PC-3 (cell line): ENCODE measurements at regions of chr13 and their contacts with region 1.

Region 1: GRCh38 chr13:110499621-110500281 is 61.8 kb downstream of the RAB20 start:
- DNase-seq: peak; percentile 80
- ATAC-seq: peak; percentile 88
- H3K4me3 ChIP-seq: peak overlapping the region; percentile 25; the same call in 1 of the 2 replicates
- H3K27ac ChIP-seq: peak overlapping the region; percentile 98
- H3K4me1 ChIP-seq: peaks cover 24% of the 10 kb centered on the region
- H3K27me3 ChIP-seq: no peaks in the 10 kb centered on the region
- CTCF ChIP-seq: no peak

Region 2: DNA sequence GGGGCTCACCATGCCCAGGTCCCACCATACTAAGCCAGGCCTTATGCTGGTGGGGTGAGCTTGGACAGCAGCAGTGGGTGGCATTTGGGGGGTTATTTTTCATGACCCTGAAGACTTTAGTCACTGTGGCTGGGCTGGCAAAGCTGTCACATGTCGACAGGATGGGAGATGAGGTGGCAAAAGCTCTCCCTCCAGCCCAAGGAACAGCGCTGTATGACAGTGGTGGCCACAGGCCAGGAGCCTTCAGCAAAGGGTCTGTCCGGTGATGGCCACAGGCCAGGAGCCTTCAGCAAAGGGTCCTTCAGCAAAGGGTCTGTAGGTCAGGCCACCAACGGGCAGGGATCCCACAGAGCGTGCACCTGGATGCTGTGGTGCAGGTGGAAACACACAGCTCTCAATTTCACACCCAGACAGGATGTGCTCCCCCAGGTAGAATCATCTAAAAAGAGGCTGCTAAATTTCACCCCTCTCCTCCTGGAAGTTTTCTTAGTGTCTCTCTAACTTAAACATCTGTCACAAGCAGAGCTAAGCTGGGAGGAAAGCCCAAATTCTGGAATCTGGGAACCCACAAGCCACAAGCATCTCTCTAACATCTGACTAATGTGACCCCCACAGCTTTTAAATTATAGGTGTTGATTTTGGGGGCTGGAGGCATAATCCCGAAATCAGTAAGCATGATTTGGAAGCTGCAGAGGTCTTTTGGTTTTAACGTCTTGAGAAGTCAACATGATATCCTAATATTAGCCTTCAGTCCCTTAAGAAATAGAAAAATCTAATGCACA is 215.8 kb before region 1 on chr13:
- CTCF ChIA-PET with region 1: no interaction called
- POLR2A ChIA-PET with region 1: no interaction called
- intact Hi-C with region 1: no loop called
- DNase-seq: no peak
- ATAC-seq: no peak
- H3K4me3 ChIP-seq: no peak overlapping the region
- H3K27ac ChIP-seq: no peak overlapping the region
- H3K4me1 ChIP-seq: no peaks in the 10 kb centered on the region
- H3K27me3 ChIP-seq: no peaks in the 10 kb centered on the region
- CTCF ChIP-seq: no peak

Region 3: DNA sequence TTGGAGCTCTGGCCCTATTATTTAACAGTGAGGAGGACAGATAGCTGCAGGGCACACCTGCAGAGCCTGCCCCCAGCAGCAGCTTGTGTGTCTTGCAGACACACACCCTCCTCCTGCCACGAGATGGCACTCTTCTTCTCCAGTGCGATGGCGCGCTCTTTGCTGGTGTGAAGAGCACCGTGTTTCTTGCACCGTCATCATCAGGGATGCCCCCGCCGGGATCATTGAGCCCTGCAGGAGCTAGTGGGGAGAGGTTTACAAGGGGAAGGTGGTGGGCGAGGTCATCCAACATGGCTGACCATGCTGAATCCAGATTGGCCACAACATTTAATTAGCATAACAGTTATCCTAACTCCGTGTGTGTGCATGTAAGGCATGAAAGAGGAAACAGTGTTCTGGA is 43.8 kb before region 1 on chr13:
- CTCF ChIA-PET with region 1: interaction called, 5 read pairs
- POLR2A ChIA-PET with region 1: no interaction called
- intact Hi-C with region 1: loop called (anchors 5 kb)
- DNase-seq: peak; percentile 78
- ATAC-seq: peak; percentile 99
- H3K4me3 ChIP-seq: peak overlapping the region; percentile 43; the same call in 1 of the 2 replicates
- H3K27ac ChIP-seq: no peak overlapping the region
- H3K4me1 ChIP-seq: peaks cover 7% of the 10 kb centered on the region; the same call in 1 of the 2 replicates
- H3K27me3 ChIP-seq: no peaks in the 10 kb centered on the region
- CTCF ChIP-seq: peak; percentile 88

Region 4: GRCh38 chr13:110470272-110471009 is 29.3 kb before region 1 on chr13:
- CTCF ChIA-PET with region 1: no interaction called
- POLR2A ChIA-PET with region 1: no interaction called
- intact Hi-C with region 1: no loop called
- DNase-seq: no peak
- ATAC-seq: no peak
- H3K4me3 ChIP-seq: no peak overlapping the region
- H3K27ac ChIP-seq: no peak overlapping the region
- H3K4me1 ChIP-seq: no peaks in the 10 kb centered on the region
- H3K27me3 ChIP-seq: no peaks in the 10 kb centered on the region
- CTCF ChIP-seq: no peak

Region 5: GRCh38 chr13:110575322-110576069 is 75.7 kb after region 1 on chr13:
- CTCF ChIA-PET with region 1: no interaction called
- POLR2A ChIA-PET with region 1: no interaction called
- intact Hi-C with region 1: no loop called
- DNase-seq: no peak
- ATAC-seq: no peak
- H3K4me3 ChIP-seq: no peak overlapping the region
- H3K27ac ChIP-seq: no peak overlapping the region
- H3K4me1 ChIP-seq: no peaks in the 10 kb centered on the region
- H3K27me3 ChIP-seq: no peaks in the 10 kb centered on the region
- CTCF ChIP-seq: no peak

Region 6: GRCh38 chr13:110950819-110951570 is 451.2 kb after region 1 on chr13:
- CTCF ChIA-PET with region 1: no interaction called
- POLR2A ChIA-PET with region 1: no interaction called
- intact Hi-C with region 1: no loop called
- DNase-seq: no peak
- ATAC-seq: no peak
- H3K4me3 ChIP-seq: no peak overlapping the region
- H3K27ac ChIP-seq: no peak overlapping the region
- H3K4me1 ChIP-seq: peaks cover 6% of the 10 kb centered on the region; the same call in 1 of the 2 replicates
- H3K27me3 ChIP-seq: no peaks in the 10 kb centered on the region
- CTCF ChIP-seq: no peak